ENCODE measurements at regions of chr3 and their contacts with region 1.

Region 1: DNA sequence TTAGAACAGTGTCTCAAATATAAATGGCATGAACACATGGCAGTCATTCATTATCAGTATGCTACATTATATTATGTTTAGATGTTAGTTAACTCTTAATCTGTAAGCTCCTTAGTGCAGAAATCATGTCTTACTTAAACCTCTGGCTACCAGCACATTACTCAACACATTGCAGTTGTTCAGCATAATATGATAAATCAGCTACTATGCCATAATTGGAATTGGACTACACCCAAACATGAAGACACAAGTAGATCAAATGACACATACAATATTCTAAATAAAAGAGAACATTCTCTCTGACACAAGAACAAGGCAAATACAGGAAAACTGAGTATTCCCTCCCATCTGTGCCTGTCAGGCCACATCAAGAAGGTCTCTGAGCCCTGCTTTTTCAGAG is 116.1 kb downstream of the PCCB start:
- DNase-seq: no peak
- H3K4me3 ChIP-seq: no peak overlapping the region
- H3K27ac ChIP-seq: no peak overlapping the region
- H3K4me1 ChIP-seq: no peaks in the 10 kb centered on the region
- H3K27me3 ChIP-seq: no peaks in the 10 kb centered on the region
- CTCF ChIP-seq: no peak
- POLR2A ChIP-seq: no peak

Region 2: DNA sequence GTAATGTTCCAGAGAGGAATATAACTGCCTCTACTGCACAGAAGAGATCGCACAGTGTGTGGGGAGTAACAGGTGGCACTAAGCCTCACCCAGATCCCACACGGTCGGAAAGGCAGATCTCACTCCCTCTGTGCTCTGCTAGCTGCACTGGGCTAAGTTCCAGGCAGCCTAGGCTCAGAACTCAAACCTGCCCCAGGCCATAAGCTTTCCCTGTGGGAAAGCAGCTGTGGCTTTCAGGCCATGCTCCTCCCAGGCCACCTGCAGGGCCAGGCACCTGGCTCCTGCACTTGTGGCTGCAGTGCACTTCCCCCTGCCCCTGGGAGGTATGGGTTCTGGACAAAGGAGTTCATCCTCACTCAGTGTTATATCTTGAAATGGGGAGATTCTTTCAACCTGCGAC is 88.7 kb before region 1 on chr3:
- CTCF ChIA-PET with region 1: no interaction called
- POLR2A ChIA-PET with region 1: no interaction called
- dilution Hi-C with region 1: no loop called
- intact Hi-C with region 1: no loop called
- DNase-seq: no peak
- H3K4me3 ChIP-seq: no peak overlapping the region
- H3K27ac ChIP-seq: no peak overlapping the region
- H3K4me1 ChIP-seq: no peaks in the 10 kb centered on the region
- H3K27me3 ChIP-seq: no peaks in the 10 kb centered on the region
- CTCF ChIP-seq: no peak
- POLR2A ChIP-seq: no peak

Region 3: DNA sequence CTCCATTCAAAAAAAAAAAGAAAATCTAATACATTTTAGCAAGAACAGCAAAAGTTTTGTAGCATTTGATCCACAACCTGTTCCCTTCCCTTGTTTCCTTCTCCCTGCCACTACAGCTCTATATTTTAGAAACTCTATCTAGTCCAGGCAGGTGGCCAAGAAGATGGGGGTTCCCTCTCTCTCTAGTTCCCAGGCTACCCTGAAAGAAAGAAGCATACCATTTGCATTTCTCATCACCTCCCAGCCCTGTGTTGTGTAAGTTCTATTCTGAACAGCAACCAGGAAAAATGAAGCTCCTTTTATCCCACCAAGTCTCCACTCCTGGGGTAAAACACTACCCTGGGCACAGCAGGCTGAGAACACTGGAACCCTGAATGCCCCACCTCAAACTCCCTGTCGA is 16.2 kb before region 1 on chr3:
- CTCF ChIA-PET with region 1: interaction called, 22 read pairs
- POLR2A ChIA-PET with region 1: no interaction called
- dilution Hi-C with region 1: no loop called
- intact Hi-C with region 1: no loop called
- DNase-seq: no peak
- H3K4me3 ChIP-seq: no peak overlapping the region
- H3K27ac ChIP-seq: no peak overlapping the region
- H3K4me1 ChIP-seq: no peaks in the 10 kb centered on the region
- H3K27me3 ChIP-seq: no peaks in the 10 kb centered on the region
- CTCF ChIP-seq: no peak
- POLR2A ChIP-seq: no peak